Gastrocnemius medialis (tissue), 4 donors: ENCODE measurements at regions of chrX and their contacts with region 1.

Region 1: DNA sequence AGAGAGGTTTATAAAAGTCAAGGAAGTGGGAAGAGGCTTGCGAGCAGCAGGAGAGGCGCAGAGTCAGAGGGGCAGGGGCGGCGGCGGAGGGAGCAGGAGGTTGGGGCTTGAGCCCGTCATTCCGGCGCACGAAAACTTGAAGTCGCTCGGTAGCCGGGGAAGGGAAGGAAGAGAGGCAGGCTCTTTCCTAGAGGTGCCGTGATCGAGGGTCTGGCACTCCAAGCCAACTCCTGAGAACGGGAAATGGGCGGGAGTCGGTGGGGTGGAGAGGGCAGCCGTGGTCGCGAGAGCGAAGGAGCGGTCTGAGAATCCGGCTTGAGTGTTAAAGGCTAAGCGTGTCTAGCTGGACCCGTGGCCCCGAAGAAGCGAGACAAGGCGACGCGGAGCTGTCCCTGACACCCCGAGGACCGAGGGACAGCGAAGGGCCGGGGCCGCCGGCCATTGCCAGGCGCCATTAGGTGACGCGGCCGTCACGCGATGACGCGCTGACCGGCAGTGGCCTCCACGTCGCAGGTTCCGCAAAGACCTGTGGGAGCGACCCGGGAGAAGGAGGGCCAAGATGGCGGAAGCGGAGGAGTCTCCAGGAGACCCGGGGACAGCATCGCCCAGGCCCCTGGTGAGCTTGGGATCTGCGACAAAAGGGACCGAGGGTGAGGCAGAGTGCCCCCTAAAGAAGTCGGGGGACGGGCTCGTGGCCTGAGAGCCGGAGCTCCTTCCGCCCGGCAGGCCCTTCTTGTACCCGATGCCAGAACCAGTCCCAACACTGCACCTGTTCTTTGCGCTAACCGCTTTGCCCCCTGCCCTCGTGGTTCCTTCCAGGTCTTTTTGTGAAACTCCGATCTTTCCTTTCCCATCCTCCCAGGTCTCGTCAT is at the start of gene YIPF6:
- DNase-seq: peak; percentile 68 to 74
- ATAC-seq: peak; percentile 95 to 98
- H3K4me3 ChIP-seq: peak within 1 kb of the TSS; percentile 67 to 78 (median 68)
- H3K27ac ChIP-seq: peak within 1 kb of the TSS; percentile 90 to 97 (median 93)
- H3K4me1 ChIP-seq: peaks cover 0 to 11% of the 10 kb centered on the region in 2 donors
- H3K27me3 ChIP-seq: no peaks in the 10 kb centered on the region
- CTCF ChIP-seq: no peak
- POLR2A ChIP-seq: peak; percentile 82 to 86
- total RNA-seq, gene YIPF6: 27.3 to 32.7 (median 29.0) TPM

Region 2: GRCh38 chrX:68433155-68433980 is 65.4 kb before region 1 on chrX and contains the start of gene OPHN1:
- in situ Hi-C with region 1: no loop called
- intact Hi-C with region 1: loop called (anchors 1 kb)
- DNase-seq: peak; percentile 65 to 72
- ATAC-seq: peak; percentile 94 to 97
- H3K4me3 ChIP-seq: peak within 1 kb of the TSS; percentile 61 to 77 (median 72)
- H3K27ac ChIP-seq: peak within 1 kb of the TSS; percentile 83 to 91 (median 86)
- H3K4me1 ChIP-seq: peaks cover 0 to 3% of the 10 kb centered on the region in 2 donors
- H3K27me3 ChIP-seq: no peaks in the 10 kb centered on the region
- CTCF ChIP-seq: no peak
- POLR2A ChIP-seq: peak; percentile 28 to 35
- total RNA-seq, gene OPHN1: 2.3 to 10.8 (median 4.6) TPM

Region 3: DNA sequence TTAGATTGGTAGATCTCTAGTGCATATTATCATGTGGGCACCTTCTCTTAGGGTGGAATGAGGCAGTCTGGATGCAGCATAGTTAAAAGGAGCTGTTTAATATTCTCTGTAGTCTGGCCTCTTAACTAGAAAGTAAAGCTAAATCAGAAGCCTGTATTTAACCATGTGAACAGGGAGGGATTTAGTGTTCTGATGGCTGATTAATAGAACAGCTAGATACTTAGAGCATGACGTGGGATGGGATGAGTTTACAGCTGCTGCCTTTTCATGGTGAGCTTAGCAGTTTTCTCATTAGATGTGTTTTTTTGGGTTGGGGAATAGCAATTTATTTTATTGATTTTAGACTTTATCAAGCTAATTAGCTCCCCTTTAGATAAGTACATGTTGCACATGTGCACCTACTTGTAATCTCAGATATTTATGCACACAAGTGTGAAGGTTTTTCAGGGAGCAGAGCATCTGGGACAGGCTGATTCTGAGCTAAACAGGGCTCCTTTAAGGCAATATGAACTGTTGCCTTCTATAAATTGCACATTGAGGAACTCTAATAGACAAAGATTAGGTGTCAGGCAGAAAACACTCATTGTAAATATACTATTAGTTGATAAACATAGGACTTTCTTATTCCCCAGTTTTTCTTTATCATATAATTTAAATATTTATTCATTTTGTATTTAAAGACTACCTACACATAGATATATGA is 34.2 kb after region 1 on chrX:
- in situ Hi-C with region 1: no loop called
- intact Hi-C with region 1: no loop called
- DNase-seq: no peak
- ATAC-seq: no peak
- H3K4me3 ChIP-seq: no peak overlapping the region
- H3K27ac ChIP-seq: peak overlapping the region in 1 of 4 donors; percentile 30
- H3K4me1 ChIP-seq: no peaks in the 10 kb centered on the region
- H3K27me3 ChIP-seq: no peaks in the 10 kb centered on the region
- CTCF ChIP-seq: no peak
- POLR2A ChIP-seq: no peak

Region 4: GRCh38 chrX:68693481-68694434 is 195.0 kb after region 1 on chrX:
- in situ Hi-C with region 1: no loop called
- intact Hi-C with region 1: loop called (anchors 5 kb)
- DNase-seq: peak; percentile 48 to 61
- ATAC-seq: peak; percentile 53 to 82
- H3K4me3 ChIP-seq: peak overlapping the region; percentile 65 to 82 (median 73)
- H3K27ac ChIP-seq: peak overlapping the region; percentile 85 to 92 (median 86)
- H3K4me1 ChIP-seq: peaks cover 3 to 5% of the 10 kb centered on the region in 2 donors
- H3K27me3 ChIP-seq: no peaks in the 10 kb centered on the region
- CTCF ChIP-seq: no peak
- POLR2A ChIP-seq: peak; percentile 68 to 79